Activated T-helper 2 cell treated with anti-CD3 and anti-CD28 coated beads, Interferon-gamma antibody, Interleukin-2, Interleukin-4, amounts not matched to agents 10 μg/mL and 5 μg/mL and 100 μg/mL, durations not matched to agents 14 hours and 24 hours and 36 hours (primary cell): ENCODE measurements at regions of chr3 and their contacts with region 1.

Region 1: DNA sequence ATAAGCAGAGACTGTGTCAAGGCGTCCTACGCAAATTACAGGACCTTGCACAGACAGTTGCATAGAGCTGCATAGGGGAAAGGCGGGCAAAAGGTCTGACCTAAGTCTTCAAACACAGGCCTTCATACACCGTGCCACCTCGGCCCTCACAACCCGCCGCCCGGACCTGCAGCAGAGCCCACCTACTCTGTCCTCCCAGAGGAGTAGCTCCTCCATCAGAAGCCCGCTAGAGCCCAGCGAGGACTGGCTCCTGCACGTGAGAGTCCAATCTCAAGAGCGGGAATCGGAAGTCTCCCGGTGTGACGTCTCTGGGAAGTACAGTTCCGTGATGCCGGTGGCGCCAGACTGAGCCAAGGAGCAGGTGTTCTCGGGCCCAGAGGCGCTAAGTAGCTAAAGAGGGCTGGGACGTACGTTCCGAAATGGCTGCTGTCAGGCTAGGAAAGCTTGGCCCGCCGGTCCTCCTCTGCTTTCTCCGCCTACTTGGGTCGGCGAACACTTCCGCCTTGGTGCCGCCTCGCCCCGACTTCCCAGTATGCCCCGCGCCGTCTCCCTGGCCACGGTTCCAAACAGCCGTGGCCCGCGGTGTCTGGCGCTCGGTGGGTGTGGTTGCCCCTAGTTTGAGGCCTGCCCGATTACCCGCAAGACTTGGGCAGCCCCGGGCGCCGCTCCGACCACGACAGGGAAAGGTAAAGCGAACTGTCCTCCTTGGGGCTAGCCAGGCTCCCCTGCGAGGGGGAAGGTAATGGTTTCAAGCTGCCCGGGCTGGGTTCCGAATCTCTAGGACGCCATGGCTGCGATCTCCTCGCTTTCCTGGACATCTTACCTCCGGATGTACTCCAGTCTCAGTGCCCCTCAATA is at the starts of genes ASTE1 and NEK11:
- DNase-seq: peak; percentile 89
- H3K4me3 Mint-ChIP-seq: peak within 1 kb of the TSS; percentile 88
- H3K27ac Mint-ChIP-seq: peak within 1 kb of the TSS; percentile 93
- H3K4me1 Mint-ChIP-seq: peaks cover 34% of the 10 kb centered on the region
- H3K27me3 Mint-ChIP-seq: peaks cover 4% of the 10 kb centered on the region
- total RNA-seq, gene ASTE1: 7.4 and 8.0 TPM in 2 replicates
- total RNA-seq, gene NEK11: 1.1 and 1.2 TPM in 2 replicates

Region 2: GRCh38 chr3:130746246-130747039 is 280.1 kb before region 1 on chr3 and contains the start of gene PIK3R4:
- intact Hi-C with region 1: loop called (anchors 2 kb)
- DNase-seq: peak; percentile 94
- H3K4me3 Mint-ChIP-seq: peak within 1 kb of the TSS; percentile 84
- H3K27ac Mint-ChIP-seq: peak within 1 kb of the TSS; percentile 93
- H3K4me1 Mint-ChIP-seq: peaks cover 36% of the 10 kb centered on the region
- H3K27me3 Mint-ChIP-seq: no peaks in the 10 kb centered on the region
- total RNA-seq, gene PIK3R4: 33.4 and 34.9 TPM in 2 replicates

Region 3: DNA sequence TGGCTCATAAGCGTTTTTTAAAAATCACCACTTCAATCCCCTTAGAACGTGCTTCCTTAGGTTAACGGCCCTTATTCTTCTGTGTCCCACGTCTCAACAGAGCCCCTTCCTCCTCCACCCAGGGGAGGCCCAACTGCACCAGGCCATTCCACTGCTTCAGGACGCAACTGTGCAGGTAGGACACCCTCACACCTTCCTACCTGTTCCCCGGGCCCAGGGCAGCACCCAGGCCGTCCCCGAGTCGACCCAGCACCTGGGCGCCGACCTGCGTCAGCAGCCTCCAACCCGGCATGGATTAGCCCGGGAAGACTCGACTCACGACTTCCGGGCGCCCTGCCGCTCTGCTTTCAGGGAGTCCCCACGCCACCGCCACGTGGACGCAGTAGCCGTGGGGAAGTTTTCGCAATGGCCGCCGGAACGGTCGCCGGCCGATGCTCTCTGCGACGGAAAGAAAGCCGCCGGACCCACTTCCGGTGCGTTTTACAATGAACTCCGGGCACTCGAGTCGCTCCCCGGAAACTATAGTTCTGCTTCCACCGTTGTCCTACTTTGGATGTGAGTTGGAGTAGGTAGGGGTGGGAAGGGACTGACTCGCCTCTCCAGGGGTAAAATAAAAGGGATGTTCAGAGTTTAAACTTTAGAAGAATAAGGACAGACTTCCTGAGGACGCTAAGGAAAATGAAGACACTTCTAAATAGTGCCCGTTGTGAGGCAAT is 476.1 kb after region 1 on chr3 and contains the start of gene MRPL3:
- intact Hi-C with region 1: loop called (anchors 1 kb)
- DNase-seq: peak; percentile 75
- H3K4me3 Mint-ChIP-seq: peak within 1 kb of the TSS; percentile 99
- H3K27ac Mint-ChIP-seq: peak within 1 kb of the TSS; percentile 97
- H3K4me1 Mint-ChIP-seq: peaks cover 31% of the 10 kb centered on the region
- H3K27me3 Mint-ChIP-seq: no peaks in the 10 kb centered on the region
- total RNA-seq, gene MRPL3: 149 and 157 TPM in 2 replicates

Region 4: GRCh38 chr3:132034486-132035464 is 1008.2 kb after region 1 on chr3 and contains the start of gene CPNE4:
- intact Hi-C with region 1: loop called (anchors 5 kb)
- DNase-seq: peak; percentile 71
- H3K4me3 Mint-ChIP-seq: no peak within 1 kb of the TSS
- H3K27ac Mint-ChIP-seq: no peak within 1 kb of the TSS
- H3K4me1 Mint-ChIP-seq: peaks cover 8% of the 10 kb centered on the region
- H3K27me3 Mint-ChIP-seq: peaks cover 38% of the 10 kb centered on the region
- total RNA-seq, gene CPNE4: not detected in 2 replicates